ENCODE measurements at regions of chr10 and their contacts with region 1.

Region 1: GRCh38 chr10:69397972-69398371 is 18.7 kb downstream of the TACR2 start:
- DNase-seq: no peak
- ATAC-seq: no peak
- H3K4me3 ChIP-seq: no peak overlapping the region
- H3K27ac ChIP-seq: no peak overlapping the region
- H3K4me1 ChIP-seq: no peaks in the 10 kb centered on the region
- H3K27me3 ChIP-seq: no peaks in the 10 kb centered on the region

Region 2: DNA sequence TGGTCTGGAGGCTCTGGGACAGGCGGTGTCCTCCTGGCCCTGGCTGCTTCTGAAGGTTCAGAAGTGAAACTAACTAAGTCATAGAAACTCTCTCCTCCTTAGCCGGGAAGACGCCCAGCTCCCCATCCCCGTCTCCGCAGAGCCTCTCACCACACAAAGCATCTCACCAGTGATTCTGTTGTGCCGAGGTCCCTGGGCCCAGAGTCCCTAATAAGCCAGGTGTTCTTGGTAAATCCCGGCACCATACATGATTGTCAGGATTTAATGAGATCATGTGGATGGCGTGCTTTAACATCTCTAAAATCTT is 168.4 kb before region 1 on chr10:
- intact Hi-C with region 1: loop called in 1 of 2 experiments (anchors 2 kb)
- DNase-seq: no peak
- ATAC-seq: no peak
- H3K4me3 ChIP-seq: no peak overlapping the region
- H3K27ac ChIP-seq: no peak overlapping the region
- H3K4me1 ChIP-seq: no peaks in the 10 kb centered on the region
- H3K27me3 ChIP-seq: no peaks in the 10 kb centered on the region

Measured in aorta (tissue), 5 donors.